Activated naive CD4-positive, alpha-beta T cell treated with anti-CD3 and anti-CD28 coated beads for 36 hours (primary cell): ENCODE measurements at regions of chr18 and their contacts with region 1.

Region 1: DNA sequence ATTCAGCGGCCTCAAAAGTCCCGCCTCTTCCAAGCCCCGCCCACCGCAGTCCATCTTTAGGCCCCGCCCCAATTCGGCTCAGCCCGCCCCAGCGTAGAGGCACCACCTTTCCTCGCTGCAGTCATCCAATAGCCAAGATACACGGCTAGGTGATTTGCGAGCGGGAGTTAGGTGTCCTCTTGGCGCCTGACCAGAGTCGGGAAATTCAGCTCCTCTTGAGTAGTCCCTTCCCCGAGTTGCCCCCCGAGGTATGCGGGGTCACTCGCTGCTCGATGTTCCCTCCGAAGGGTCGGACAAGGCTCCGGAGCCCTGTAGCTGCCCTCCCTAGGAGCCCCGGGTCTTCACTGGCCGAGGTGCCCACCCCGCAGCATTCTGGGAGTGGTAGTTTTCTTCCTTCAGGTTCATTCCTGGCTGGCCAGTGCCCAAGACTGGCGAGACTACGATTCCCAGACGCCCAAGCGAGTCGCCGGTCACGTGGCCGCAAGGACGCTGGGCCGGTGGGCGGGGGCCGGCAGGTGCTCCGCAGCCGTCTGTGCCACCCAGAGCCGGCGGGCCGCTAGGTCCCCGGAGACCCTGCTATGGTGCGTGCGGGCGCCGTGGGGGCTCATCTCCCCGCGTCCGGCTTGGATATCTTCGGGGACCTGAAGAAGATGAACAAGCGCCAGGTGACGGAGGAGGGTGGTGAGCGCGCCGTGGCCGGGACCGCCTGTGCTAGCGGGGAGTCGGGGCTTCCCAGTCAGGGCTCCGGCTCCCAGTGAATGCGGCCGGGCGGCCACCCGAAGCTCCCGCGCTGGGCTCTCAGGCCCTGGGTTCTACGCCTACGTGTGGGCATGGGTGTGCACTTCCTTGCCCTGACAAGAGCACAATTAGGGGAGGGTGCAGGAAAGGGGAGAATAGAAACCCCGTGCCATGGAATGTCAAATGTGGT is at the start of gene SEC11C:
- DNase-seq: peak; percentile 97
- H3K4me3 Mint-ChIP-seq: peak within 1 kb of the TSS; percentile 90
- H3K27ac Mint-ChIP-seq: peak within 1 kb of the TSS; percentile 97
- H3K4me1 Mint-ChIP-seq: peaks cover 43% of the 10 kb centered on the region
- H3K27me3 Mint-ChIP-seq: peaks cover 3% of the 10 kb centered on the region
- total RNA-seq, gene SEC11C: 45.0 to 46.7 TPM

Region 2: DNA sequence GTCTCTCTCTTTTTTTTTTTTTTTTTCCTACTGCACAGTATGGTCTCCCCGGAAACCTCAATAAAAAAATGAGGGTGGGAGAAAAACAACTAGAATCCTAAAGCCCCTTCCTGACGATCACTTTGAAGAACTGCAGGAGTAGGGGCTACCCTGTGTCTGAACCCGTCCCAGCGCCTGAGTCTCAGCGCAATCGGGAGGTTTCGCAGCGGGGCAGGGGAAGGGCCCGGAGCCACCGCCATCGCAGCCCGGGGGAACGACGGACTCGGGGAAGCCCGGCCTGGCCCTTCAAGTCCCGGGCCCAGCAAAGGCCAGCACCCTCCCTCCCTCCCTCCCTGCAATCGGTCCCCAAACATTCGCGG is 1518.4 kb before region 1 on chr18:
- CTCF ChIA-PET with region 1: no interaction called
- intact Hi-C with region 1: loop called (anchors 5 kb)
- DNase-seq: peak; percentile 28
- H3K4me3 Mint-ChIP-seq: peak overlapping the region; percentile 98
- H3K27ac Mint-ChIP-seq: peak overlapping the region; percentile 95
- H3K4me1 Mint-ChIP-seq: peaks cover 32% of the 10 kb centered on the region
- H3K27me3 Mint-ChIP-seq: no peaks in the 10 kb centered on the region

Region 3: GRCh38 chr18:58615140-58616132 is 524.2 kb before region 1 on chr18:
- CTCF ChIA-PET with region 1: no interaction called
- intact Hi-C with region 1: loop called (anchors 5 kb)
- DNase-seq: peak; percentile 91
- H3K4me3 Mint-ChIP-seq: peak overlapping the region; percentile 40
- H3K27ac Mint-ChIP-seq: peak overlapping the region; percentile 85
- H3K4me1 Mint-ChIP-seq: peaks cover 46% of the 10 kb centered on the region
- H3K27me3 Mint-ChIP-seq: no peaks in the 10 kb centered on the region

Region 4: GRCh38 chr18:59123588-59124369 is 15.9 kb before region 1 on chr18:
- CTCF ChIA-PET with region 1: interaction called, 3 read pairs
- intact Hi-C with region 1: loop called (anchors 1 kb)
- DNase-seq: peak; percentile 51
- H3K4me3 Mint-ChIP-seq: no peak overlapping the region
- H3K27ac Mint-ChIP-seq: peak overlapping the region; percentile 52
- H3K4me1 Mint-ChIP-seq: peaks cover 2% of the 10 kb centered on the region
- H3K27me3 Mint-ChIP-seq: peaks cover 10% of the 10 kb centered on the region

Region 5: DNA sequence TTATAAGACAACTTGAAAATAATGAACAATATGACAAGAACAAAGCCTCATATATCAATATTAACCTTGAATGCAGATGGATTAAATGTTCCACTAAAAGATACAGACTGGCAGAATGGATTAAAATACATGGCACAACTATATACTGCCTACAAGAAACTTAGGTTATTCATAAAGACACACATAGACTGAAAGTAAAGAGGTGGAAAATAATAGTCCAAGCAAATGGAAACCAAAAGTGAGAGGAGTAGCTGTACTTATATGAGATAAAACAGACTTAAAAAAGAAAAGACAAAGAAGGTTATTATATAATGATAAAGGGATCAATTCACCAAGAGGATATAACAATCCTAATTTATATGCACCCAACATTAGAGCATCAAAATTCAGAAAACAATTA is 201.2 kb after region 1 on chr18:
- CTCF ChIA-PET with region 1: no interaction called
- intact Hi-C with region 1: loop called (anchors 5 kb)
- DNase-seq: no peak
- H3K4me3 Mint-ChIP-seq: no peak overlapping the region
- H3K27ac Mint-ChIP-seq: peak overlapping the region; percentile 25
- H3K4me1 Mint-ChIP-seq: peaks cover 48% of the 10 kb centered on the region
- H3K27me3 Mint-ChIP-seq: no peaks in the 10 kb centered on the region

Region 6: GRCh38 chr18:59899298-59900221 is 759.9 kb after region 1 on chr18 and contains the start of gene PMAIP1:
- CTCF ChIA-PET with region 1: no interaction called
- intact Hi-C with region 1: loop called (anchors 1 kb)
- DNase-seq: peak; percentile 90
- H3K4me3 Mint-ChIP-seq: peak within 1 kb of the TSS; percentile 94
- H3K27ac Mint-ChIP-seq: peak within 1 kb of the TSS; percentile 99
- H3K4me1 Mint-ChIP-seq: peaks cover 29% of the 10 kb centered on the region
- H3K27me3 Mint-ChIP-seq: no peaks in the 10 kb centered on the region
- total RNA-seq, gene PMAIP1: 132 to 141 TPM